ENCODE measurements at regions of chr1 and their contacts with region 1.

Region 1: DNA sequence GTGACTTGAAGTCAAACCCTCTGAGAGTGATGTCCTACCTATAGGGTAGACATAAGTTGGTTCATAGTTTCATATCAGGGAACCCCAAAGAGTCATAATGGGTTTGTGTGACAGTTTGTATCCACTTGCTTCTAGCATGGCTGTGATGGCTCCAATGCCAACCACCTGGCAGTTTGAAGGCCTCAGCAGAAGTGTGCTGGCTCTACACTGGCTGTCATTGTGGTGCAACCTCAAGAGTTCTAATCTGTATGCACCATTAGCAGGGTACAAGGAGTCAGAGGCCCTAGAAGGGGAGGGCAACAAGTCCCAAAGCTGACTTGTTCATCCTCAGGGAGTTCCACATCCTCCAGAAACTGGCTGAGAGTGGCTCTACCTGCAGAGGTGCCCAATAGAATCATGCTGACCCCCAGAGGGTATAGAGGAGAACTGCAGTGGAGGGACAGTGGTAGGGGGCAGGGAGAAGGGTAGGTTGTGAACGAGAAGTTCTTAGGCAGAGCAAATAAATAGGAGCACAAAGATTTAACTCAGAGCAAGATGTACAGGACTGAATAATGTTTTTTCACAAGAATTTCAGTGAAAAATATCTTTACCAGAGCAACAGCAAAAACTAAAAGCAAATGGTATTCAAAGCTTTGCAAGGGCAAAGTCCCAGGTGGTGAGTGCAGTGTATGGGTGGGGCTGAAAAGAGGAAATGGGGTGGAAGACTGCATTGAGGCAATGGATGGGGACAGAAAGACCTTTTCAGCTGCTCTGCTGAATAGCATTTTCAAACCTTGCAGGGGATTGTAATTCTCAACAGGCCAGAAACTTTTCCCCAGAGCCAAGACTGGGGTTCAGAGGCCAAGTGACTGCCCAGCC is 3.2 kb downstream of the FCRL2 start:
- DNase-seq: peak; percentile 88
- H3K4me3 ChIP-seq: peak overlapping the region; percentile 43
- H3K27ac ChIP-seq: peak overlapping the region; percentile 68
- H3K4me1 ChIP-seq: peaks cover 63% of the 10 kb centered on the region
- CTCF ChIP-seq: peak; percentile 99

Region 2: GRCh38 chr1:157496121-157496526 is 277.6 kb before region 1 on chr1:
- CTCF ChIA-PET with region 1: no interaction called
- POLR2A ChIA-PET with region 1: no interaction called
- intact Hi-C with region 1: loop called (anchors 5 kb)
- DNase-seq: peak; percentile 82
- H3K4me3 ChIP-seq: no peak overlapping the region
- H3K27ac ChIP-seq: no peak overlapping the region
- H3K4me1 ChIP-seq: peaks cover 30% of the 10 kb centered on the region
- CTCF ChIP-seq: peak; percentile 93

Region 3: DNA sequence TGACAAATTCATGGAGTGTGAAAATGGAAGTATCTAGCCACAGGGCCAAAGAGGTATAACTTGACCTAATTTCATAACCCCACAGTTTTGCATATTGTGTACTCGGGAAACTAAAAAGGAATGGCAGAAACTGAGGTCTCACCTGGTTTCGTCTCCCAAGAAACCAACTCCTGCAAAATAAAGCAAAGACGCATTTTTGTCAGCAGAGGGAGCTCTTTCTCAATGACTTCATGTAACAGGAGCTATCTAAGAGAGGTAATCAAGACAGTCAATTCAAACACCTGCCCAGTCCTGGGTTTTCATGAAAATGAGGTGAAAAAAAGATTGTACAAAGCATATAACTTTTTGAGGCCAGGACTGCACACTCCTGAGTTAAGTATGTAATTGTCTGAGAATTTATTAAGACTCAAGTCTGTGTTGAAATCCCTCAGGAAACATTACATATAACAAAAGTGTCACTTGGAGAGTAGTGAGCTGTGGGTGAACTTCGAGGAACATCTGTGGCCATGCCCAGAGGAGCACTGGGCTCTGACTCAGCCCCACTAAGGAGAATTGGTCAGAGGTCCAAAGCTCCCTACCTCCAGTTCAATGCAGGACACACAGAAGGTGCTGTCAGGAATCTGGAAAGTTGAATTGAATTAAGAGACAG is 193.4 kb before region 1 on chr1:
- CTCF ChIA-PET with region 1: interaction called, 4 read pairs
- POLR2A ChIA-PET with region 1: interaction called, 5 read pairs
- intact Hi-C with region 1: loop called (anchors 1 kb)
- DNase-seq: peak; percentile 86
- H3K4me3 ChIP-seq: no peak overlapping the region
- H3K27ac ChIP-seq: no peak overlapping the region
- H3K4me1 ChIP-seq: peaks cover 44% of the 10 kb centered on the region
- CTCF ChIP-seq: peak; percentile 97

Region 4: GRCh38 chr1:157725221-157725577 is 48.5 kb before region 1 on chr1:
- CTCF ChIA-PET with region 1: interaction called, 3 read pairs
- POLR2A ChIA-PET with region 1: no interaction called
- intact Hi-C with region 1: loop called (anchors 10 kb)
- DNase-seq: peak; percentile 71
- H3K4me3 ChIP-seq: peak overlapping the region; percentile 61
- H3K27ac ChIP-seq: peak overlapping the region; percentile 93
- H3K4me1 ChIP-seq: peaks cover 45% of the 10 kb centered on the region
- CTCF ChIP-seq: no peak

Region 5: GRCh38 chr1:157862114-157863070 is 88.7 kb after region 1 on chr1:
- CTCF ChIA-PET with region 1: no interaction called
- POLR2A ChIA-PET with region 1: interaction called, 3 read pairs
- intact Hi-C with region 1: loop called (anchors 1 kb)
- DNase-seq: peak; percentile 46
- H3K4me3 ChIP-seq: no peak overlapping the region
- H3K27ac ChIP-seq: no peak overlapping the region
- H3K4me1 ChIP-seq: no peaks in the 10 kb centered on the region
- CTCF ChIP-seq: peak; percentile 71